Posterior cingulate gyrus (tissue), 11 donors: ENCODE measurements at regions of chr14 and their contacts with region 1.

Region 1: DNA sequence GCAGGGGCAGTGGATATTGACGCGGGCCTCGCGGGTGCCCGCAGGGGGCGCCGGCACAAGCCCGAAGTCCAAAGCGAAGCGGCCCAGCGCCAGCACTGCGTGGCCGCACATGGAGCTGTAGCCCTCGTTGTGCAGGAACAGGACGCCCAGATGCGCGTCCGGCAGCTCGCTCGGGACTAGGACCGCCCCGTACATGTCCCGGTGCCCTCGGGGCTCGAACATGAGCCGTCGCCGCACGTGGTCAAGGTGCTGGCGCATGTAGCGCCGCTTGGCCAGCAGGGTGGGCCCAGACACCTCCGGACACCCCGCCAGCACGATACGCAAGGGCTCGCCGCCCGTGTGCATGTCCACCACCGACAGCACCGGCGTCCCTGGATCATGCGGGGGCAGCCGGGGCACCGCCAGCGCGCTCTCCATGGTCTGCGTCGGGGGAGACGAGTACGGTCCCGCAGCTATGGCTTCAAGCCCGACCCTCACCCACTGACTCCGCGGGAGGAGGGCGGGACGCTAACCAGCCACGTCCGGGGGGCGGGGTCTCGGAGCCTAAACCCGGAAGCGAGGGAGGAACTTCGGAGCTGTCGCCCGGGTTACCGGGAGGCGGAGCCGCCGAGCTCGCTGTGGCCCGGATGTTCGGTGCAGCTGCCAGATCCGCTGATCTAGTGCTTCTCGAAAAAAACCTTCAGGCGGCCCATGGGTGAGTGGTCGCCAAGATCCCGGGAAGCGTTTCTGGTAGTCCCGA is at the starts of genes JKAMP and L3HYPDH:
- DNase-seq: peak; percentile 95 to 99 (median 96)

Region 2: DNA sequence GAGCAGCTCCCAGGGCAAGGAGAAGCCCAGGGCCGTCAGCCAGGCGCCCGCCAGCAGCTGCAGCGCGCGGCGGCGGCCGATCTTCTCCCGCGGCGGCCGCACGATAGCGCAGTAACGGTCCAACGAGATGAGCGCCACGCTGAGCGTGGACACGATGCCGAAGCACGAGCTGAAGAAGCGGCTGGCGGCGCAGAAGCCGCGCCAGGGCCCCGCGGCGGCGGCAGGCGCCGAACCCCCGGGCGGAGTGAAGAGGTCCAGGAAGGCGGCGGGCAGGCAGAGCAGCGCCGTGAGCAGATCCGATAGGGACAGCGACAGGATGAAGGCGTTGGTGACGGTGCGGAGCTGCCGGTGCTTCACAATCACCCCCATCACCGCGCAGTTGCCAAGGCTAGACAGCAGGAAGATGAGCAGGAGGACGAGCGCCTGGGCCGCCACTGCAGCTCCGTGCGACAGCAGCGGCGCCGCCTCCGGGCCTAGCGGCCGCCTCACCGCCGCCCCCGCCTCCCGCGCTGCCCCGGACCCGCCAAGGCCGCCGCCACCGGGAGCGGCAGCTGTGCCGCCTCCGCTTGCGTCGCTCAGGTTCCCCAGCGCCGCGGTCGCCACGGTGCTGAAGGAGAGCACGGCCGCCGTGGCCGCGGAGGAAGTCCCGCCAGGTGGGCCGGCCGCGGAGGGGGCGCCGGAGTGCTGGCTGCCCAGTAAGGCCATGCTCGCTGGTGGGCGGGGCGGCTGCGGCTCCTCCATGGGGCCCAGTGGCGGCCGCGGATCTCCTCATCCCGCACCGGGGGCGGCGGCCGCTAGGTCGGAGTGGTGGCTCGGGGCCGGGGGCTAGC is 19.4 kb before region 1 on chr14:
- intact Hi-C with region 1: loop called (anchors 2 kb)
- DNase-seq: peak; percentile 37 to 94 (median 62)

Region 3: DNA sequence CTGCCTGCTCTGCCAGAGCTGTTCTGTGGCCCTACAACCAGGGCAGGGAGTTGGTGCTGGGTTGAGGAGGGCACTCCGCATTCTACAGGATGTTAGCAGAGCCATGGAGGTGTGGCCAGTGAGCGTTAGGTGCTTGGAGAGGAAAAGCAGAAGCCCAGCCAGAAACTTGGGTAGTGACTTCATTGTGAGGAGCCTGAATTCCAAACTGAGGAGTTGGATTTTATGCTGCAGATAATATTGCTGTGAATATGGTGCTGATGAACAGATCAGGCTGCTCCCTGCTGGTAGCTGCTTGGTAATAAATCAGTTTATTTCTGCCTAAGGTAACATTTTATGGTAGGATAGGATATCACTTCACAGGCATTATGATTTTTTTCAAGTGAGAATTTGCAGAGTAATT is 99.7 kb after region 1 on chr14:
- intact Hi-C with region 1: no loop called
- DNase-seq: peak in 1 of 10 donors; percentile 61